ENCODE measurements at regions of chr18 and their contacts with region 1.

Region 1: DNA sequence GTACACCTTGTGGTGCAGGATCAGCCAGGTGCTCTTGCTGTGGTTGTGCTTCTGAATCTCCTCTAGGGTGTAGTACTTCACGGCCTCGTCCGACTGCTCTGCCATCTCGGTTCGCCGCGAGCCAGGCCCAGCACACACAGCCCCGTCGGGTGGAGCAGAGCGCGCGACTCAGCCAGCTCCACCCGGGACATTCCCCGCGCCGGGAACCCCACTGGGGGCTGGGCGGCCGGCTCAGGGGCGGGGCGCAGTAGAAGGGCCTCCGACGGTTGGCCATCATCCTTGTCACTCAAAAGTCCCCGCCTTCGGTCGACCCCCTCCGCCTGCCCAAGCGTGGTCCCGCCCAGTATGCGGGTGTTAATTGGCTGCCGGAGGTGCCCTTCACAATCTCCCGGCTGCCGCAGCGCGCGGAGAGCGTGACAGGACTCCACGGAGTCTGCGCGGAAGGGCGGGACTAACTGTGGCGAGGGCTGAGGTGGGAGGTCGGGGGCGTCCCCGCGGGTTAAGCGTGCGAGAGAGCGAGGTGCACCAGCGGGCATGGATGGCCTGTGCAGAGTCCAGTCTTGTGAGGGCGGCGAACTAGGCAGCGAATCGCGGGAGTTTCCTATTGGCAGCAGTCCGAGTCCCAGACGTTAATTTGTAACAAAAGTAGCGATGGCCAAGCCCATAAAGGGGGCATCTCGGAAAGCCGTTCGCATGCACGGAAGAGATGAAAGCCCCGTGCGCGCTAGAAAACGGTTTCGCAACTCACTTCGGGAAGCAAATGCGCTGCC is at the start of gene CYB5A:
- DNase-seq: peak; percentile 99
- H3K4me3 Mint-ChIP-seq: no peak within 1 kb of the TSS
- H3K27ac Mint-ChIP-seq: peak within 1 kb of the TSS; percentile 59
- H3K4me1 Mint-ChIP-seq: peaks cover 20% of the 10 kb centered on the region
- H3K27me3 Mint-ChIP-seq: no peaks in the 10 kb centered on the region
- total RNA-seq, gene CYB5A: 77.8 to 78.3 TPM

Region 2: DNA sequence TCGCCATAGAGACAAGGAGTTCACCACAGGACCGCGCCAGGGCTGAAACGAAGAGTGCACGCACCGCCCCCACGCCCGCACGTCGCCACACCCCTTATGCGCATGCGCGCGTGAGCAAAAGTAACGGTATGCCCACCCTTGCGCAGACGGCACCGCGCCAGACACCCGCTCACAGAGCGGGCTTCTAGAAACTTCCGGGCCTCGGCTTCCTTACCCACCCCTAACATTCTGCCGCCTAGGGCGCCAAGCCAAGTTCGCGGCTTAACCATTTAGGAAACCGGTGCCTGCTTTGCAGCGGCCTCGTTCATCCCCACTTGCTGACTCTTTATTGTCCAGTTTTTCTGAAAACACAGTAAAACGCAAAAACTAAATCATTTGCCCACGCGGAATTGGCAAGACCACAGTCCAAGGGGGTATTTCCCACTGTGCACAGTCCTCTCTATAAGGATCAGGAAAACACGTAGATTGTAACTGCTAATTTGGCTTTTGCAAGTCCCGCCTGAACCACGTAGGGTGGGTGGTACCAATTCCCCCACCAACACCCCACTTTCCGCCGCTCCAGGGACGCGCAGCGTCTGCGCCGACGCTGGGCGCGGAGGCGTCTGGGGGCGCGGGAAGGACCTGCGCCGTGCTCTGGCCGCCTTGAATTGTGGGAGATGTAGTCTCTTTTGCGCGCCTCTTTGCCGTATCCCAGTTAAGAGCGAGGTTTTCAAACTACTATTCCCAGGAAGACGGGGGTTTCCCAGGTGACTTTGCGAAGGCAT is 144.0 kb before region 1 on chr18 and contains the starts of genes FBXO15 and TIMM21:
- CTCF ChIA-PET with region 1: no interaction called
- intact Hi-C with region 1: loop called (anchors 1 kb)
- DNase-seq: peak; percentile 95
- H3K4me3 Mint-ChIP-seq: peak within 1 kb of the TSS; percentile 96
- H3K27ac Mint-ChIP-seq: peak within 1 kb of the TSS; percentile 97
- H3K4me1 Mint-ChIP-seq: peaks cover 42% of the 10 kb centered on the region
- H3K27me3 Mint-ChIP-seq: no peaks in the 10 kb centered on the region
- total RNA-seq, gene FBXO15: 1.2 to 1.3 TPM
- total RNA-seq, gene TIMM21: 35.6 to 37.7 TPM

Region 3: GRCh38 chr18:74249181-74249968 is 42.6 kb before region 1 on chr18:
- CTCF ChIA-PET with region 1: no interaction called
- intact Hi-C with region 1: loop called (anchors 5 kb)
- DNase-seq: no peak
- H3K4me3 Mint-ChIP-seq: no peak overlapping the region
- H3K27ac Mint-ChIP-seq: no peak overlapping the region
- H3K4me1 Mint-ChIP-seq: peaks cover 16% of the 10 kb centered on the region
- H3K27me3 Mint-ChIP-seq: no peaks in the 10 kb centered on the region

Region 4: DNA sequence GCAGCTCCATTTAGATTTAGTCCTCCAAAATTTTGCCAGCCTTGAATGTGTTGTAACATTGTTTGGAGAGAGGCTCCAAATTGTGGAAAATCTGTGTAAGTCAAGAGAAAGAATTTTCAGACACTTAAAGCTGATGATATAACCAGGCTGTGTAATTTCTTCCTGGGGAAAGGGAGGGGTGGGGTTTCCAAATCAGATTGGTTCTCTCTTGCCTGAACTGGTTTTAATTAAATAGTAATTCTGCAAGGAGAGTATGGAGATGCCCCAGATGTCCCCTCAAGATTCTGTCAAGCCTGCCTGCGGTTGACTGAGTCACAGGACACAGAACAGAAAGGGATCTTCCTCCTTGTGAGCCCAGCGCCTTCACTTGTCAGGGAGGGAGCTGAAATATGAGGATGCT is 78.2 kb after region 1 on chr18:
- CTCF ChIA-PET with region 1: no interaction called
- intact Hi-C with region 1: no loop called
- DNase-seq: no peak
- H3K4me3 Mint-ChIP-seq: no peak overlapping the region
- H3K27ac Mint-ChIP-seq: no peak overlapping the region
- H3K4me1 Mint-ChIP-seq: peaks cover 46% of the 10 kb centered on the region
- H3K27me3 Mint-ChIP-seq: no peaks in the 10 kb centered on the region

Region 5: DNA sequence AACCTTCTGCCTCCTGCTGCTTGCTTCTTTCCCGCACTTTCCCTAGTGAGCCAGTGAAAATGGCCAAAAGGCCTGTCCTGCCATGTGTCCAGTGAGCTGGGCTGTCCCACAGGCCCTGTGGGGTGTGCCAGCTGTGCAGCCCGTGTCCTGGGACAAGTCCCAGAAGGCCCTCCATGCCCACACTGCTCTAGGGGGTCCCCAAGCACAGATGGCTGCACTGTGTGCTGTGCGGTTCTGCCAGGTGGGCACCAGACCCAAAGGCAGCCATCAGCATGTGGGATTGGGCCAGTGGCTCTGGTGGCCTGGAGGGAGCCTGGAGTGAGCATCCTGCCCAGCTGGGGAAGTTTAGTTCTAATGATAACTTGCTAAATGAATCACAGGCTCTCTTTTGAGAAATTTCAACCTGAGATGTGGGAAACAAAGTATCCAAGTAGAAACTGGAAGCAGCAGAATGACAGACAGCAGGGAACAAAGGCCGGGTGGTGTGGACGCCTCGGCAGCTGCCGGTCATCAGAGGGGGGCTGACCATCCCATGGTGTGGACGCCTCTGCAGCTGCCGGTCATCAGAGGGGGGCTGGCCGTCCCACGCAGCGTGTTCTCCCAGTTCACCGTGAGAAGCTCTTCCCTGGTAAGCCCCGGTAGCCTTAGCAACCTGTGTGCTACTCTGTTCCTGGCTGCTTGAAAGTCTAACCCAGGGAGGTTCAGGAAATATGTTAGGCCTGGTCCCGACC is 194.3 kb after region 1 on chr18:
- CTCF ChIA-PET with region 1: no interaction called
- intact Hi-C with region 1: no loop called
- DNase-seq: no peak
- H3K4me3 Mint-ChIP-seq: no peak overlapping the region
- H3K27ac Mint-ChIP-seq: no peak overlapping the region
- H3K4me1 Mint-ChIP-seq: peaks cover 17% of the 10 kb centered on the region
- H3K27me3 Mint-ChIP-seq: no peaks in the 10 kb centered on the region

Measured in activated naive CD4-positive, alpha-beta T cell treated with anti-CD3 and anti-CD28 coated beads for 36 hours (primary cell).